Left lung (tissue), 14 donors: ENCODE measurements at regions of chr16 and their contacts with region 1.

Region 1: DNA sequence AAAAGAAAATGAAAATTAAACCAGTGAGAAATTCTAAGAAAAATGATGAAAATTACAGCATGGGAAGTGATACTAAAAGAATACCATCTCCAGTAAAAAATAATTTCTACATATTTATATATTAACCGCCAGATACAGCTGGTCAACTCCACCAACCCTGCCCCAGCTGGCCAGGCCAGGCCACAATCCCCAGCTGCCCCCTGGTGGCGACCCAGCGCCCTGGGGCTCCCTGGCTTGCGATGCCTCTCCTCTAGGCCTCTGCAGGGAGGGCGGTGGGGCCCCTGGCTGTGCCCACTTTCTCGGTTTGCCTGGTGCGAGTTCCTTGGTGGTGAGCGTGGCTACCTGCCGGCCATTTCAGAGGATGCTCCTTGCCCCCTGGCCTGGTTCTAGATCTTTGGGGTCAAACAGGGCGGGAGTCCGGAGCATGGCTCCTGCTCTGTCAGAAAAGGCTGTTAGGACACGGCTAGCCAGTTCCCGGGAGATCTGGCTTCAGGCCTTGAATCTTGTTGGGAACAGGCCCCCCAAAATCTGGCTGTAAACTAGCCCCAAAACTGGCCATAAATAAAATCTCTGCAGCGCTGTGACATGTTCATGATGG is 14.5 kb downstream of the GLIS2 start:
- DNase-seq: peak in 3 of 4 donors; percentile 81 to 96 (median 82)
- ATAC-seq: peak; percentile 78
- H3K4me3 ChIP-seq: no peak overlapping the region
- H3K27ac ChIP-seq: peak overlapping the region in 1 of 2 donors; percentile 35
- H3K4me1 ChIP-seq: peaks cover 25 to 58% of the 10 kb centered on the region in 2 donors
- H3K27me3 ChIP-seq: peaks cover 0 to 19% of the 10 kb centered on the region in 2 donors
- CTCF ChIP-seq: peak; percentile 87 to 97

Region 2: DNA sequence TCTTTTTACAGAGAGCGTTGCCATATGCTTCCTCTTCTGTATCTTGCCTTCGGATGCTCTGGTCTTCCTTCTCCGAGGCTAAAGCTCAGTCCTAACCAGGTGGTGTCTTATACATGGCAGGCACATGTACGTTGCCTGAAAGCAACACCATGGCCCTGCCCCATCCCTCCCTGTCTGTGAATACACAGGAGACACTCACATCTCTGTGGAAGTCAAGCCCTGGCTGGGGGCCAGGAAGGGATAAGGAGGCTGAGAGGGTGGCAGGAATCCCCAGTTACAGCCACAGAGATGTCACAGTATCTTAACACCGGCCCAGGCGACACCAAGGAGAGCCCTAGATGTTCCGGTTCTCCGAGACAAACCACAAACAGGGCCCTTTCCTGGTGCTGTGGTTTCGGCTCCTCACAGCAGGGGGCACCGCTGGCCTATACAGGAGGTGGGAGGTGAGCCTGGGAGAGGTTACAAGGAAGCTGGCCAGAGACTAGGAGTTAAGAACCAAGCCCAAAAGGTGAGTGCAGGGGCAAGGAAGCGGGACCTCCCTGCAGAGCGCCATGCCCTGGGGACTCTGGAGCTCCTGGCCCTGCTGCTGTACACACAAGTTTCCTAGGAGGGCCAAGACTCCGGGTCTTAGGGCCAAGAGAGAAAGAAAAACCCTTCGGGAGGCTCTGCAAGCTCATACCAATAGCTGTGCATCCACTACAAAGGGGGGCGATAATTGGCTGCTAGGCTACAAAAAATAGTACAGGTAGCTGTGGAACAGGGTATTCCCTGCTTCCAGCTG is 130.2 kb before region 1 on chr16:
- intact Hi-C with region 1: loop called in 1 of 2 experiments (anchors 5 kb)
- DNase-seq: peak; percentile 53 to 87 (median 69)
- ATAC-seq: peak; percentile 99
- H3K4me3 ChIP-seq: no peak overlapping the region
- H3K27ac ChIP-seq: no peak overlapping the region
- H3K4me1 ChIP-seq: peaks cover 0 to 4% of the 10 kb centered on the region in 2 donors
- H3K27me3 ChIP-seq: peaks cover 0 to 4% of the 10 kb centered on the region in 2 donors
- CTCF ChIP-seq: peak; percentile 56 to 60

Region 3: DNA sequence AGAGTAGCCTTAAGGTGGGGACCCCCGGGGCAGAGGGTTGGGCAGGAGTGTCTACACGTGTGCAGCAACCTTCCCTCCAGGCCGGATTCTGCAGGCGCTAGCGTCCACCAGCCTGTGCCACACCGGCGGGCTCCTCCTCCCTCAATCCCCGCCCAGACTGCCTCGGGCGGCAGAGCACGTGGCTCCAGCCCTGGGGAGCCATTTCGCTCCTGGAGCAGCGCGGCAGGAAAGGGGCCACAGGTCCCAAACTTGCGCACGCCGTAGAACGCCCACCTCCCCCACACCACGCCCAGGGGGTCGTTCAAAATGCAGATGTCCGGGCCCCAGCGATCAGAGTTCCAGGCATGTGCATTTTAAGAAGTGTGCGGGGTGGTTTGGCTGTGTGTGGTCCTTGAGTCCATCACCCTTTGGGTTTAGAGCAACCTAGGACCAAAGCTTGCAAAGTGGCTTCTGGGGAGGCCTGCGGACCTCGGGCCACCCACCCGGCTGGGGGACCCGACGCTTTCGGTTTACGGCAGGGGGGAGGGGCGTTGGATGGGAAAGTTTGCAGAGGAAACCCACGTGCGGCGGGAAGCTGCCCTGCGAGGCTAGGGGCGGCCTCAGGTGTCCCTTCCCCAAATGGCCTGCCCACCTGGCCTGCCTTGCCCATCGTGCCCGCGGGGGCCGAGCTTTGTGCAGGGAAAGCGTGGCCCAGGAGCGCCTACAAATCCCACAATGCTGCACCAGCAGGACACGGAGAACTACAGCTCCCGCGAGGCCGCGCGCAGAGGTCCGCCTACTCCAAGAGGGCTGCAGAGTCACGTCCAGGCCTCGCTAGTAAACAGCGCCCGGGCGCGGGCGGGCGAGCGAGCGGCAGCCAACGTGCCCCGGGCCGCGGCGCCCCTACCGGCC is 59.0 kb before region 1 on chr16:
- intact Hi-C with region 1: no loop called
- DNase-seq: peak; percentile 87 to 98 (median 94)
- ATAC-seq: peak; percentile 88
- H3K4me3 ChIP-seq: peak overlapping the region; percentile 86 to 87
- H3K27ac ChIP-seq: peak overlapping the region; percentile 86 to 90
- H3K4me1 ChIP-seq: peaks cover 5 to 24% of the 10 kb centered on the region in 2 donors
- H3K27me3 ChIP-seq: no peaks in the 10 kb centered on the region
- CTCF ChIP-seq: no peak

Region 4: GRCh38 chr16:4288148-4288921 is 42.0 kb before region 1 on chr16:
- intact Hi-C with region 1: loop called in 1 of 2 experiments (anchors 5 kb)
- DNase-seq: peak in 3 of 4 donors; percentile 73 to 95 (median 75)
- ATAC-seq: peak; percentile 75
- H3K4me3 ChIP-seq: no peak overlapping the region
- H3K27ac ChIP-seq: no peak overlapping the region
- H3K4me1 ChIP-seq: peaks cover 11 to 26% of the 10 kb centered on the region in 2 donors
- H3K27me3 ChIP-seq: peaks cover 0 to 1% of the 10 kb centered on the region in 2 donors
- CTCF ChIP-seq: peak; percentile 91 to 94

Region 5: DNA sequence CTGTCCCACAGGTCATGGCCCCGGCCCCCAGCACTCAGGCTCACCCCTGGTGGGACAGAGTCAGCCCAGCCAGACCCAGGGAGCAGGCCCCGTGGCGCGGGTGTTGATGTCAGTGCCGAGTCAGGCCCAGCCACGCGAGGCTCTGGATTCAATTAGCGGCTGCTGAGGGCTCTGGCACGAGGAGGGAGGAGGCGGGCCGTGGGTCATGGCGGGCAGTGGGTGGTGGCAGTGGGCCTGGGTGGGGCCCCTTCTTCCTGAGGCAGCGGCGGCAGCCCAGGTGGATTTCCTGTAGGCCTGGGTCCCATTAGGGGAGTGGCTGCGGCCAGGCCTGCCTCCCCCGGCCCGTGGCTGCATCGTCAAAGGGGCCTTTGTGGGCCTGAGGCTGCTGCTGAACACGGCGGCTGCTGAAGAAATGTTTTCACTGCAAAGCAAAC is 54.1 kb after region 1 on chr16:
- intact Hi-C with region 1: no loop called
- DNase-seq: no peak
- ATAC-seq: no peak
- H3K4me3 ChIP-seq: no peak overlapping the region
- H3K27ac ChIP-seq: peak overlapping the region in 1 of 2 donors; percentile 5
- H3K4me1 ChIP-seq: peaks cover 0 to 9% of the 10 kb centered on the region in 2 donors
- H3K27me3 ChIP-seq: no peaks in the 10 kb centered on the region
- CTCF ChIP-seq: no peak

Region 6: DNA sequence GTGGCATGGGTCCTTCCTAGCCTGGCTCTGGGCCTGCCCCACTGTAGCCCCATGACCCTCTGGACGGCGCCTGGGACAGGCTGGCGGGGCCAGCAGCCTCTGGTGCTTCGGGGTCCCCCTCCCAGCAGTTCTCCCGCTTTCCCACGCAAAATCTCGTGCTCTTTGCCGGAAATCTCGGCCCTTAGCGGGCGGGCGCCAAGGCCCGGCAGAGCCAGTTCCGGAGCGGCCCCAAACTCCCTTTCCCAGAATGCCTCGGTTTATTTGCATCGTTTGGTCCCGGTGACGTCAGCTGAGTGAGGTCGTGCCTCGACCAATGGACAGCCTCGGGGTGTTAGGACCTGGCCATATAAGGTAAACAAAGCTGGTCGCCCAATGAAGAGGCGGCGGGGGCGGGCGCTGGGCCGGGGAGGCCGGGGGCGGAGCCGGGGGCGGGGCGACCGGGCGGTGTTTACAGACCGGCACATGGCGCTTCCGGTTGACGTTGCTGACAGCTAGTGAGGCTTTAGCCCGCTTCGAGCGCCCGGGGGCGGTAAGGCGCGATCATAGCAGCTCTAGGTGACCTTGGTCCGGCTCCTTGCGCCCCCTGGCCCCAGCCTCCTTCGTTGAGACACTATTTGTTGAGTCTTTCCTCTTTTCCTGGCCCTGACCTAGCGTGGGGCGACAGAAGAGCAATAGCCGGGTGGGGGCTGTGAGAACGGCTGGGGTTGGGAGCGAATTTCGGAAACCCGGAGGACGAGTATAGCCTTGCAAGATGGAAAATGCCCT is 285.9 kb after region 1 on chr16:
- intact Hi-C with region 1: no loop called
- DNase-seq: peak; percentile 98 to 100 (median 100)
- ATAC-seq: peak; percentile 89
- H3K4me3 ChIP-seq: peak overlapping the region; percentile 35 to 93
- H3K27ac ChIP-seq: peak overlapping the region; percentile 95
- H3K4me1 ChIP-seq: peaks cover 28 to 55% of the 10 kb centered on the region in 2 donors
- H3K27me3 ChIP-seq: no peaks in the 10 kb centered on the region
- CTCF ChIP-seq: no peak

Region 7: GRCh38 chr16:5062790-5063765 is 732.7 kb after region 1 on chr16:
- intact Hi-C with region 1: no loop called
- DNase-seq: peak in 1 of 4 donors; percentile 19
- ATAC-seq: no peak
- H3K4me3 ChIP-seq: no peak overlapping the region
- H3K27ac ChIP-seq: no peak overlapping the region
- H3K4me1 ChIP-seq: peaks cover 0 to 6% of the 10 kb centered on the region in 2 donors
- H3K27me3 ChIP-seq: no peaks in the 10 kb centered on the region
- CTCF ChIP-seq: no peak